HepG2 (cell line): ENCODE measurements at regions of chr1 and their contacts with region 1.

Region 1: GRCh38 chr1:227952374-227953021 is 4.8 kb upstream of the WNT9A start:
- DNase-seq: no peak
- ATAC-seq: no peak
- H3K4me3 ChIP-seq: no peak overlapping the region
- H3K27ac ChIP-seq: no peak overlapping the region
- H3K4me1 ChIP-seq: no peaks in the 10 kb centered on the region
- H3K27me3 ChIP-seq: peaks cover 6 to 54% of the 10 kb centered on the region in 2 experiments; a peak in 4 of 5 replicates
- CTCF ChIP-seq: no peak
- EP300 ChIP-seq: no peak
- POLR2A ChIP-seq: no peak
- RAD21 ChIP-seq: no peak

Region 2: GRCh38 chr1:227482023-227482299 is 470.5 kb before region 1 on chr1:
- CTCF ChIA-PET with region 1: interaction called, 11 read pairs
- POLR2A ChIA-PET with region 1: no interaction called
- in situ Hi-C with region 1: loop called (anchors 10 kb)
- intact Hi-C with region 1: loop called (anchors 1 kb)
- DNase-seq: no peak
- ATAC-seq: no peak
- H3K4me3 ChIP-seq: no peak overlapping the region
- H3K27ac ChIP-seq: no peak overlapping the region
- H3K4me1 ChIP-seq: no peaks in the 10 kb centered on the region
- H3K27me3 ChIP-seq: no peaks in the 10 kb centered on the region
- CTCF ChIP-seq: no peak
- EP300 ChIP-seq: no peak
- POLR2A ChIP-seq: no peak
- RAD21 ChIP-seq: no peak

Region 3: GRCh38 chr1:227762233-227762911 is 190.1 kb before region 1 on chr1:
- CTCF ChIA-PET with region 1: interaction called, 36 read pairs
- POLR2A ChIA-PET with region 1: no interaction called
- in situ Hi-C with region 1: loop called (anchors 5 kb)
- intact Hi-C with region 1: loop called (anchors 2 kb)
- DNase-seq: peak; percentile 55
- ATAC-seq: peak; percentile 94
- H3K4me3 ChIP-seq: no peak overlapping the region
- H3K27ac ChIP-seq: no peak overlapping the region
- H3K4me1 ChIP-seq: no peaks in the 10 kb centered on the region
- H3K27me3 ChIP-seq: no peaks in the 10 kb centered on the region
- CTCF ChIP-seq: peak; percentile 96
- EP300 ChIP-seq: no peak
- POLR2A ChIP-seq: no peak
- RAD21 ChIP-seq: peak; percentile 92

Region 4: DNA sequence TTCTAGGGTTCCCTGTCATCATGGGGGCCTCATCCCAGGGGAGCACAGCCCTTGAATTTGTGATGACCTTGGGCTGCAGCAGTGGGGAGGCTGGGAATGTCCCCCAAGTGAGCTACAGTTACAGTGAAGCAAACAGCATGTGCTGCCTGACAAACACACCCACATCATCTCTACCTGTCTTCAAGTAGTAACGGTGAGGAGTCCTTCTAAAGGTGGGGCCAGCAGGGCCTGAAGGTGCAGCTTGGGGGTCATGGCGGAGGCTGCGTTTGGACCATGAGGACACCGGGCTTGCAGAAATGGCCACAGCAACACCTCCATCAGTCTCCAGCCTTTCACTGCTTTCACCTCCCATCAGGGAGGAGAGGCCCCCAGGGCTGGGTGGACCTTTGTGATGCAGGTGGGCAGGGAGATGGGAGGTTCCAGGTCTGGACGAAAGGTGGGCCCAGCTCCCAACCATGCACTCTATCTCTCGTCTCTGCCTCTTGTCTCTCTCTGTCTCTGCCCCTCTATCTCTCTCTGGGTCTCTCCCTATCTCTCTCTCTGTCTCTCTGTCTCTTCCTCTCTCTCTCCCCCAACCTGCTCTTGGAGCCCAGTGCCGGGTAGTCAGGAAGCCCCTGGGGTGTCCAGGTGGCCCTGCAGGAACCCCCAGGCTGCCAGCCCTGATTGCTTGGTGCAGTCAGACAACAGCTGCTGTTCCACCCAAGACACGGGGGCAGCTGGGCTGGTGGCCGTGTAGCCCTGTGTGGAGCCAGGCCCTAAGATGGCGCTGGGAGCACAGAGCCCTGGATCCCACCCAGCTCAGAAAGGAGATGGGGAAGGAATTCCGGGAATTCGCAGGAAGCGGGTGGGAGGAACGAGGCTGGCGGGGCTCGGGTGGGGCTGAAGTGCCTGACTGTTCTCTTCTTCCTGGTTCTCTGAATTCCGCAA is 60.3 kb before region 1 on chr1:
- CTCF ChIA-PET with region 1: no interaction called
- POLR2A ChIA-PET with region 1: no interaction called
- in situ Hi-C with region 1: no loop called
- intact Hi-C with region 1: no loop called
- DNase-seq: no peak
- ATAC-seq: no peak
- H3K4me3 ChIP-seq: no peak overlapping the region
- H3K27ac ChIP-seq: no peak overlapping the region
- H3K4me1 ChIP-seq: peaks cover 20% of the 10 kb centered on the region
- H3K27me3 ChIP-seq: peaks cover 6 to 37% of the 10 kb centered on the region in 2 experiments
- CTCF ChIP-seq: no peak
- EP300 ChIP-seq: no peak
- POLR2A ChIP-seq: no peak
- RAD21 ChIP-seq: no peak

Region 5: DNA sequence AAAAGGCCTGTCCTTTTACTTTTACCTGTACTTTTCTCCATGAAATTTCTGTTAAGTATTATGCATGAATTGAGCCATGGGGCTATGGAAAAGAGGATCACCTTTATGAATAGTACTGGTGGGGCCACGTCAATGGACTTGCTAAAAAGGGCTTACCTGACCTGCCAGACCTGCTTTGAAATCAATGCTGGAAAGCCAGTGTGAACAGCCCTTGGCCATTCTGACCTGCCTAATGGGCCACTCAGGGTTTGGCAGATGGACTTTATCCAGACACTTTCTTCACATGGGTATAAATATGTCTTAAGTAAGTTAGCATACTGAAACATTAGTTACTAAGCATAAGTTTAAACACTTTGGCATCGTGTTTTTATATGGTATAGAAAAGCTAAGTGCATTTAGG is 179.3 kb after region 1 on chr1:
- CTCF ChIA-PET with region 1: no interaction called
- POLR2A ChIA-PET with region 1: no interaction called
- in situ Hi-C with region 1: no loop called
- intact Hi-C with region 1: no loop called
- DNase-seq: no peak
- ATAC-seq: no peak
- H3K4me3 ChIP-seq: no peak overlapping the region; a peak in 1 of 6 replicates
- H3K27ac ChIP-seq: no peak overlapping the region
- H3K4me1 ChIP-seq: 0 out of 2 replicates have a peak, but pooled peaks cover 4% of the 10 kb centered on the region
- H3K27me3 ChIP-seq: peaks cover 0 to 8% of the 10 kb centered on the region in 2 experiments; a peak in 2 of 5 replicates
- CTCF ChIP-seq: no peak
- EP300 ChIP-seq: no peak
- POLR2A ChIP-seq: no peak
- RAD21 ChIP-seq: no peak

Region 6: GRCh38 chr1:228751360-228752113 is 799.0 kb after region 1 on chr1:
- CTCF ChIA-PET with region 1: no interaction called
- POLR2A ChIA-PET with region 1: no interaction called
- in situ Hi-C with region 1: no loop called
- intact Hi-C with region 1: no loop called
- DNase-seq: no peak
- ATAC-seq: no peak
- H3K4me3 ChIP-seq: no peak overlapping the region
- H3K27ac ChIP-seq: no peak overlapping the region
- H3K4me1 ChIP-seq: peaks cover 16% of the 10 kb centered on the region
- H3K27me3 ChIP-seq: peaks cover 2 to 9% of the 10 kb centered on the region in 2 experiments; a peak in 4 of 5 replicates
- CTCF ChIP-seq: no peak
- EP300 ChIP-seq: no peak
- POLR2A ChIP-seq: no peak
- RAD21 ChIP-seq: no peak